ENCODE measurements at regions of chr14 and their contacts with region 1.

Region 1: DNA sequence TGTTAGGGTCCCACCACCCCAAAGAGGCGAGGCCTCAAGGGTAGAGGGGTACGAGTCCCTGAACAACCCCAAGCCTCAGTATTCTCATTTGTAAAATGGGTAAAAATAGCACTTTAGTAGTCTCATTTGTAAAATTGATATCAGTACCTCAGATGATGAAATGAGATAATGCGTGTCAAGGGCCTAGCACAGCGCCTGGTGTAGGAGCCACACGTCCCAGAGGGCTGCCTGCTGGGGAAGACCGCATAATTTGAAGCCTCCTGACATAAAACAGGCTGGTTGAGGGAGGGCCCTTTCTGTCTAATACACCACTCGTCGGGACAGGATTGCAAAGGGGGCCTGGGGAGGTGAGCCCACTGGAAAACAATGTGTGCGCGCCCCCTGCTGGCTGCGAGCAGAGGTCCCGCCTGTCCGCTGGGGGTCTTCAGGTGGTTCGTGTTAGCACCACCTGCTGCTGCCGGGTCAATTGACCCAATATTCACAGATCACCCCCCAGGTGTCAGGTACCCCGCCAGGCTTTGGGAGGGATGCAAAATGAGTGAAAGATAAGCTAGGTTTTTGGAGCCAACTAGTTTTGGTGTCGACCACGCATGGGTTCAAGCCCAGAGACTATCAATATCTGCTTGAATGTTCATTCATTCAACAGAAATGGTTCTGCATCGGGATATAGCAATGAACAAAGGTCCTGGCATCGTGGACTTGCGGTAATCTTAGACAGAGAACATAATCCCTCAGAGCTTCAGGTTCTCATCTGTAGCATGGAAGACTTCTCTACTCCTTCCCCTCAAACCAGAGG is 24.7 kb upstream of the IRF2BPL start:
- DNase-seq: peak; percentile 80 to 82
- ATAC-seq: peak; percentile 61 to 85 (median 75)
- H3K4me3 ChIP-seq: no peak overlapping the region
- H3K27ac ChIP-seq: peak overlapping the region in 9 of 10 donors; percentile 42 to 90 (median 80)
- H3K4me1 ChIP-seq: peaks cover 8 to 36% (median 23%) of the 10 kb centered on the region in 9 donors
- H3K27me3 ChIP-seq: no peaks in the 10 kb centered on the region
- CTCF ChIP-seq: peak; percentile 69 to 98 (median 94)

Region 2: GRCh38 chr14:76910371-76910890 is 142.8 kb before region 1 on chr14:
- intact Hi-C with region 1: loop called (anchors 1 to 5 kb)
- DNase-seq: no peak
- ATAC-seq: no peak
- H3K4me3 ChIP-seq: no peak overlapping the region
- H3K27ac ChIP-seq: no peak overlapping the region
- H3K4me1 ChIP-seq: peaks cover 6 to 25% (median 13%) of the 10 kb centered on the region in 9 donors
- H3K27me3 ChIP-seq: no peaks in the 10 kb centered on the region
- CTCF ChIP-seq: no peak

Region 3: DNA sequence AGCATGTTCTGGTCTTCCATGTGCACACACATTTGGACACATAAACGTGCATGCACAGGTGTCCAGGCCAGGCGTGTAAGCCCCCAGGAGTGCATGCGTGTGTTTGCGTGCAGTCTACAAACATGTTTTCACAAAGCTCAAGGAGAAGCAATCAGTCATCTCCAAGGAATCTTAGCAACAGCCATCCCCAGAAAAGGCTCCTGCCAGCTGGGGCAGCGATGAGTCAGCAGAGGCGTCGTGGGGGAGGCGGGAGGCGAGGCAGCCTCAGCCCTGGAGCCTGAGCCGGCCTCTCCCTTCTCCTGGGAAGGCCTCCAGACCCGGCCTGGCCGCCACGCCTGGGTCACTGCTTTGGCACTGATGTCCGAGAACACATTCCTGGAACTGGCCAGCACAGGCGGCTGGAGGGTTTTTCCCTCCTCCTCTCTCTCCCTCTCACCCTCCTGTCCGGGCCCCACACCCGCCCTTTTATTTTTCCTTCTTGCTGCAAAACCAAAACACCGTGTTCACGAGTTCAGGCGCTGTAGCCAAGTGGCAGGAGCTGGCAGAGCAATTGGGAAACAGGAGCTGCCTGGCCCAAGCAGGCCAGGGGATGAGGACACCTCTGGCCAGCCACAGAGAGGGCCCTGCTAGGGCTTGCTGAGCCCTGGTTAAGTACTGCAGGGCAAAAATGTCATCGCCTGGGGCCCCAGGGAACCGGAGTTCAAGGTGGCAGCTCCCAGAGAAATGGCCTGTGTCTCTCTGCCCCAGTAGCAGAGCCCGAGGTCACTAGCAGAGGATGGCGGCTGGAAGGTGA is 134.3 kb before region 1 on chr14:
- intact Hi-C with region 1: loop called in 2 of 10 experiments (anchors 2 to 5 kb)
- DNase-seq: peak; percentile 93 to 94
- ATAC-seq: peak; percentile 86 to 93 (median 91)
- H3K4me3 ChIP-seq: peak overlapping the region in 4 of 10 donors; percentile 1 to 16 (median 6)
- H3K27ac ChIP-seq: peak overlapping the region; percentile 83 to 98 (median 92)
- H3K4me1 ChIP-seq: peaks cover 35 to 75% (median 56%) of the 10 kb centered on the region in 9 donors
- H3K27me3 ChIP-seq: no peaks in the 10 kb centered on the region
- CTCF ChIP-seq: no peak

Region 4: DNA sequence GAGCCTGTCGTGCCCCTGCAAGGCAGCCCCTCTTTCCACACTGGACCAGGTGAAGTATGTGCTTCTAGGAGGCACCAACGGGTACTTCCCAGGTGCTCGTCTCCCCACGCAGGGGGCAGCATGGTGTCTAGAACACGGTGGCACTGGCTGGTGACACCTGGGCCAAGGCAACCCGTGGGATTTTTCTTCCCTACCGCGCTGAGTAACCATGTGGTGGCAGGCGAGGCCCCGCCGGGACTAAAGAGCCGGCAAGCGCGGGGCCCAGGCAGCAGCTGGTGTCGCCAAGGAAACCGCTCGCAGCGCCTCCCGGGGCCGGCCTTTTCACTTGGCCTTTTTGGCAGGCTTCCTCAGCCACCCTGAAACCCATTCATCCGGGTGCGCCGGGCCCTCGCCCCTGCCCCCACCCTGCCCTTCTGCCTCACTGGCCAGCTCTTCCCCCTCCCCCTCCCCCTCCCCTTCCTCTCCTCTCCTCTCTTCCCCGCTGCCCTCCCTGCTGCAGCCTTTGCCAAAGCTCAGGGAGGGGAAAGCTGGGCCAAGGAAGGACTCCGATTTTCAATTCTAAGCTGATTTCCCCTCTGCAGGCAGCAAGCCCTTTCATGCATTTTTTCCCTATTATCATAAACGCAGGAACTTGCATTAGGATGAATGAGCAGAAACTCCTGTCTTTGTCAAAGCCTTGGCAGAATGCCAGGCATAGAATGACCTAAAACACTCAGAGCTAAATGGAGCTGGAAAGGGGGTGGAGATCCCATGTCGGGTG is 106.0 kb before region 1 on chr14:
- intact Hi-C with region 1: loop called in 2 of 10 experiments (anchors 5 to 10 kb)
- DNase-seq: peak; percentile 90 to 93
- ATAC-seq: peak; percentile 89 to 94 (median 93)
- H3K4me3 ChIP-seq: peak overlapping the region in 5 of 10 donors; percentile 5 to 38 (median 15)
- H3K27ac ChIP-seq: peak overlapping the region; percentile 1 to 90 (median 83)
- H3K4me1 ChIP-seq: peaks cover 21 to 56% (median 45%) of the 10 kb centered on the region in 9 donors
- H3K27me3 ChIP-seq: no peaks in the 10 kb centered on the region
- CTCF ChIP-seq: peak; percentile 25 to 79 (median 63)

Measured in heart right ventricle (tissue), 16 donors.